Activated T-helper 2 cell treated with anti-CD3 and anti-CD28 coated beads, Interferon-gamma antibody, Interleukin-2, Interleukin-4, amounts not matched to agents 10 μg/mL and 5 μg/mL and 100 μg/mL, durations not matched to agents 14 hours and 24 hours and 36 hours (primary cell): ENCODE measurements at regions of chr16 and their contacts with region 1.

Region 1: GRCh38 chr16:10322723-10323527 is 62.9 kb upstream of the ATF7IP2 start:
- DNase-seq: no peak
- H3K4me3 Mint-ChIP-seq: no peak overlapping the region
- H3K27ac Mint-ChIP-seq: no peak overlapping the region
- H3K4me1 Mint-ChIP-seq: peaks cover 5% of the 10 kb centered on the region
- H3K27me3 Mint-ChIP-seq: no peaks in the 10 kb centered on the region

Region 2: GRCh38 chr16:10362077-10362863 is 39.3 kb after region 1 on chr16:
- intact Hi-C with region 1: no loop called
- DNase-seq: no peak
- H3K4me3 Mint-ChIP-seq: peak overlapping the region; percentile 17
- H3K27ac Mint-ChIP-seq: peak overlapping the region; percentile 14
- H3K4me1 Mint-ChIP-seq: peaks cover 12% of the 10 kb centered on the region
- H3K27me3 Mint-ChIP-seq: peaks cover 5% of the 10 kb centered on the region

Region 3: GRCh38 chr16:10501016-10501607 is 178.2 kb after region 1 on chr16:
- intact Hi-C with region 1: loop called (anchors 2 kb)
- DNase-seq: peak; percentile 14
- H3K4me3 Mint-ChIP-seq: no peak overlapping the region
- H3K27ac Mint-ChIP-seq: no peak overlapping the region
- H3K4me1 Mint-ChIP-seq: no peaks in the 10 kb centered on the region
- H3K27me3 Mint-ChIP-seq: no peaks in the 10 kb centered on the region

Region 4: GRCh38 chr16:10699756-10700155 is 376.8 kb after region 1 on chr16:
- intact Hi-C with region 1: loop called (anchors 5 kb)
- DNase-seq: no peak
- H3K4me3 Mint-ChIP-seq: no peak overlapping the region
- H3K27ac Mint-ChIP-seq: no peak overlapping the region
- H3K4me1 Mint-ChIP-seq: no peaks in the 10 kb centered on the region
- H3K27me3 Mint-ChIP-seq: no peaks in the 10 kb centered on the region